ENCODE measurements at regions of chr2 and their contacts with region 1.

Region 1: DNA sequence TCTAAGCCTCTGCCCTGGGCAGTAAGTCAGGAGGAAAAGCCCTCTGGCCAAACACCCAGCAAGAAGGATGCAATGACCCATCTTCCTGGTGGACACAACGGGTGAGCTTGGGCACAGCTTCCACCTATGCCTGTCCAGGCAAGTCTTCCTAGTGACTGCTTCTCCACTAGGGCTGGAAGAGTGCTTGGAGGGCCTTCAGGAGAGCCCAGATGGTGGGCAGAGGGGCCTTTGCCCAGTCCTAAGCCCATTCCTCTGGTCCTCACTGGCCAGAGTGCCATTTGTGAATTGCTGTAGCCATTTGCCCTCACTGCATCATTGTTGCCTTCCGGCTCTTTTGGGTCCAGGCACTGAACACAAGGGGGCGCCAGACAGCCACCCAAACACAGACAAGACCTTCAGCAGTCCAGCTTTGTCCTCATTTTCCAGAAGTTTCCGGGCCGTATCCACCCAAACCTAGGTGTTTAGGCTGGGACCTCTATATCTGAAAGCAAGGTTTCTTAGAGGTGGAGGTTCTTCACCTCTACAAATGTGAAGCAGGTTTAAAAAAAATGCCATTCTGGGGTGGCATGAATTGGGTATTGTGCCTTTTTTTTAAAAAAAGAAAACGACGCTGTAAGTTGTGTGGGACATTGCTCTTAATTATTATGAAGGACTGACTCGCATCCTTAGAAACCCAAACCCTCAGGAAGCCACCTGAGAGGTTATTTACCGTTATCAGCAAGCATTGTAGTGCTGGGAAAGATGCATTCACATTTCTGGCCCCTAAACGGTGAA is 29.5 kb downstream of the PAX8 start:
- DNase-seq: peak; percentile 68 to 81 (median 72)
- H3K4me3 ChIP-seq: no peak overlapping the region
- H3K4me3 Mint-ChIP-seq: no peak overlapping the region
- H3K27ac ChIP-seq: no peak overlapping the region
- H3K27ac Mint-ChIP-seq: peak overlapping the region in 1 of 7 donors; percentile 51
- H3K4me1 ChIP-seq: peaks cover 0 to 8% of the 10 kb centered on the region in 2 donors
- H3K4me1 Mint-ChIP-seq: peaks cover 14% of the 10 kb centered on the region
- H3K27me3 ChIP-seq: no peaks in the 10 kb centered on the region
- H3K27me3 Mint-ChIP-seq: peaks cover 0 to 3% (median 3%) of the 10 kb centered on the region in 3 donors
- CTCF ChIP-seq: peak; percentile 91

Region 2: GRCh38 chr2:113203901-113204519 is 45.2 kb before region 1 on chr2:
- intact Hi-C with region 1: loop called (anchors 2 to 5 kb)
- DNase-seq: peak; percentile 41 to 72 (median 72)
- H3K4me3 ChIP-seq: no peak overlapping the region
- H3K4me3 Mint-ChIP-seq: no peak overlapping the region
- H3K27ac ChIP-seq: no peak overlapping the region
- H3K27ac Mint-ChIP-seq: peak overlapping the region in 2 of 7 donors; percentile 26 to 53
- H3K4me1 ChIP-seq: peaks cover 4 to 5% of the 10 kb centered on the region in 2 donors
- H3K4me1 Mint-ChIP-seq: peaks cover 7% of the 10 kb centered on the region
- H3K27me3 ChIP-seq: no peaks in the 10 kb centered on the region
- H3K27me3 Mint-ChIP-seq: peaks cover 2 to 4% (median 2%) of the 10 kb centered on the region in 3 donors
- CTCF ChIP-seq: peak; percentile 88

Region 3: GRCh38 chr2:113209011-113209641 is 40.1 kb before region 1 on chr2:
- intact Hi-C with region 1: loop called (anchors 2 to 5 kb)
- DNase-seq: no peak
- H3K4me3 ChIP-seq: no peak overlapping the region
- H3K4me3 Mint-ChIP-seq: no peak overlapping the region
- H3K27ac ChIP-seq: no peak overlapping the region
- H3K27ac Mint-ChIP-seq: peak overlapping the region in 1 of 7 donors; percentile 14
- H3K4me1 ChIP-seq: peaks cover 20 to 21% of the 10 kb centered on the region in 2 donors
- H3K4me1 Mint-ChIP-seq: peaks cover 20% of the 10 kb centered on the region
- H3K27me3 ChIP-seq: no peaks in the 10 kb centered on the region
- H3K27me3 Mint-ChIP-seq: peaks cover 4 to 9% (median 5%) of the 10 kb centered on the region in 3 donors
- CTCF ChIP-seq: no peak

Region 4: DNA sequence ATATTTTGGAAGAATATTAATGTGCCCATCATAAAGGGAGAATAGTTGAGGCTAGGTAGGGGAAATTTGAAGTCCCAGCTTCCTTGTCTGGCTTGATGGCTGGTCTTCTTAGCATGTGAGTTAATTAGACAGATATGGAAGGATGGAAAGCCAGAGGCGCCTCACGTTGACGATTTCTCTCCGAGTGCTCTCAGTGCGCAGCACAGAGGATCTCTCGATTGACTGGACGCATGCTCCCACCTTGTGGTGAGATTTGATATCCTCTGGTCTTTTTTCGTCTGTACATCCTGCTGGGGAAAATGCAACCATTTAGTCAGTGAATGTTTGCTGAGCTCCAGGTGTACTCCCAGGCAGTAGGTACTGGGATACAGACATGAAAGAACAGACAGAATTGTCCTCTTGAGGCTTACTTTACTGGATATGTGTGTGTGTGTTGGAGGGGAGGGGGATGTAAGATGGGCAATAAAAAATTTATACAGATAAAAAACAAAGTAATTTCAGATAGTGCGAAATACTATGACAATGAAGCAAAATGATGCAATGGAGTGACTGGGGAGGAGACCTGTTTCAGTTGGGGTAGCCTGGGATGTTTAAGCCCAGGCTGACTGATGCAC is 121.4 kb after region 1 on chr2:
- intact Hi-C with region 1: loop called (anchors 2 to 5 kb)
- DNase-seq: peak; percentile 52 to 76 (median 74)
- H3K4me3 ChIP-seq: no peak overlapping the region
- H3K4me3 Mint-ChIP-seq: no peak overlapping the region
- H3K27ac ChIP-seq: no peak overlapping the region
- H3K27ac Mint-ChIP-seq: peak overlapping the region in 3 of 7 donors; percentile 68 to 77 (median 71)
- H3K4me1 ChIP-seq: peaks cover 46 to 47% of the 10 kb centered on the region in 2 donors
- H3K4me1 Mint-ChIP-seq: peaks cover 57% of the 10 kb centered on the region
- H3K27me3 ChIP-seq: no peaks in the 10 kb centered on the region
- H3K27me3 Mint-ChIP-seq: peaks cover 0 to 4% (median 0%) of the 10 kb centered on the region in 3 donors
- CTCF ChIP-seq: peak; percentile 74

Region 5: DNA sequence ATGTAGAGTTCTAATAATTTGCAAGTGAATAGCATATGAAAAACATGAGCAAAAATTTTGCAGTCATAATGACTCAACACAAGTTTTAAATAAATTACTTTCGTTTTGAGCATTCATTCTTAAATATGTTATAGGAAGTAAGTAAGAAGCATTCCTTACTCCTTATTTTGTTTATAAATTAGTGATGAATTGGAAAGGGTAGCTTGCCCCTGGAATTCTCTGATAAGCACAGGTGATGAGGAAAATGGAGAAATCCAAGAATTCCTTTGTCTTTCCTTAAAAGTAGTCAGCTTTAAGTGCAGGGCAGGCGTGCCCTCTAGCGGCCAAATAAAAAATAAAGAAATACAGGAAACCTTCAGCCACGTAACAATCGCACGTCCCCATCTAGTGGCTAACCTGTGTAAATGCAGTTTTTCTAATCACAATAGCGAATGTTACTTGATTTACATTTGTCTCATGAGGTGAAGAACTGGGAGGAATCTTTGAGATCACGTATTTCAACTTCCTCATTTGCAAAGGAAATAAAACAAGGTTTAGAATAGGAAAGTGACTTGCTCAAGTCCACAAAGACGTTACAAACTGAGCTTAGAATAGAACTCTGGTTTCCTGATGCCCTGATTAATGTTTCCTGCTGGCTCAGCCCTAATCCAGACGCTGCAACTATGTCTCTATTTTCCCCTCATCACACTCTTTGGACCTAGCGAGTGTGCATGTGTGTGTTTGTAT is 141.1 kb after region 1 on chr2:
- intact Hi-C with region 1: loop called in 1 of 2 experiments (anchors 5 kb)
- DNase-seq: peak; percentile 85 to 93 (median 92)
- H3K4me3 ChIP-seq: peak overlapping the region; percentile 33 to 69 (median 51)
- H3K4me3 Mint-ChIP-seq: peak overlapping the region; percentile 75 to 89
- H3K27ac ChIP-seq: peak overlapping the region; percentile 93 to 95
- H3K27ac Mint-ChIP-seq: peak overlapping the region; percentile 95 to 100 (median 99)
- H3K4me1 ChIP-seq: peaks cover 30 to 35% of the 10 kb centered on the region in 2 donors
- H3K4me1 Mint-ChIP-seq: peaks cover 43% of the 10 kb centered on the region
- H3K27me3 ChIP-seq: no peaks in the 10 kb centered on the region
- H3K27me3 Mint-ChIP-seq: peaks cover under 1 to 2% (median 2%) of the 10 kb centered on the region in 3 donors
- CTCF ChIP-seq: peak; percentile 100

Measured in CD14-positive monocyte (primary cell).